Natural killer cell (primary cell): ENCODE measurements at regions of chr12 and their contacts with region 1.

Region 1: GRCh38 chr12:6873094-6874014 is at the start of gene SPSB2:
- DNase-seq: peak; percentile 99 to 100
- ATAC-seq: peak; percentile 87 to 99 (median 91)
- H3K4me3 ChIP-seq: peak within 1 kb of the TSS; percentile 81
- H3K4me3 Mint-ChIP-seq: peak within 1 kb of the TSS; percentile 93
- H3K27ac ChIP-seq: peak within 1 kb of the TSS; percentile 63
- H3K27ac Mint-ChIP-seq: peak within 1 kb of the TSS; percentile 87 to 94
- H3K4me1 ChIP-seq: peaks cover 50% of the 10 kb centered on the region
- H3K4me1 Mint-ChIP-seq: peaks cover 41 to 56% of the 10 kb centered on the region in 2 donors
- H3K27me3 ChIP-seq: no peaks in the 10 kb centered on the region
- H3K27me3 Mint-ChIP-seq: no peaks in the 10 kb centered on the region
- CTCF ChIP-seq: no peak
- total RNA-seq, gene SPSB2: 8.1 to 19.1 (median 8.4) TPM

Region 2: GRCh38 chr12:6851921-6852650 is 21.3 kb before region 1 on chr12 and contains the start of gene USP5:
- intact Hi-C with region 1: loop called (anchors 1 kb)
- DNase-seq: peak; percentile 96 to 99
- ATAC-seq: peak; percentile 79 to 92 (median 80)
- H3K4me3 ChIP-seq: peak within 1 kb of the TSS; percentile 76
- H3K4me3 Mint-ChIP-seq: peak within 1 kb of the TSS; percentile 91
- H3K27ac ChIP-seq: peak within 1 kb of the TSS; percentile 95
- H3K27ac Mint-ChIP-seq: peak within 1 kb of the TSS; percentile 95 to 99
- H3K4me1 ChIP-seq: peaks cover 22% of the 10 kb centered on the region
- H3K4me1 Mint-ChIP-seq: peaks cover 8 to 43% of the 10 kb centered on the region in 2 donors
- H3K27me3 ChIP-seq: no peaks in the 10 kb centered on the region
- H3K27me3 Mint-ChIP-seq: no peaks in the 10 kb centered on the region
- CTCF ChIP-seq: no peak
- total RNA-seq, gene USP5: 48.3 to 67.2 (median 57.2) TPM

Region 3: DNA sequence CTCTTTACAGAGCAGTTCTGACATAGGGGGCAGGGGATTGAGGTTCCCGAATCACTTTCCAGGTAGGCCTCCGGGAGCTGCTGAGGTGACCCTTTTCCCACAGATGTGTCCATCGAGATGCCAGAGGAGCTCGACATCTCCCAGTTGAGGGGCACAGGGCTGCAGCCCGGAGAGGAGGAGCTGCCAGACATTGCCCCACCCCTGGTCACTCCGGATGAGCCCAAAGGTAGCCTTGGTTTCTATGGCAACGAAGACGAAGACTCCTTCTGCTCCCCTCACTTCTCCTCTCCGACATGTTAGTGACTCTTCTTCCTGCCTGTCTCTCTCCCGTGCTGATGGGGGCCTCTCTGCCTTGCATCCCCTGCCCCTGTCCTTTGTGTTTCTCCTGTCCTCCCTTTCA is 10.3 kb before region 1 on chr12:
- intact Hi-C with region 1: no loop called
- DNase-seq: no peak
- ATAC-seq: no peak
- H3K4me3 ChIP-seq: no peak overlapping the region
- H3K4me3 Mint-ChIP-seq: no peak overlapping the region
- H3K27ac ChIP-seq: no peak overlapping the region
- H3K27ac Mint-ChIP-seq: no peak overlapping the region
- H3K4me1 ChIP-seq: peaks cover 9% of the 10 kb centered on the region
- H3K4me1 Mint-ChIP-seq: peaks cover 0 to 5% of the 10 kb centered on the region in 2 donors
- H3K27me3 ChIP-seq: no peaks in the 10 kb centered on the region
- H3K27me3 Mint-ChIP-seq: no peaks in the 10 kb centered on the region
- CTCF ChIP-seq: no peak

Region 4: DNA sequence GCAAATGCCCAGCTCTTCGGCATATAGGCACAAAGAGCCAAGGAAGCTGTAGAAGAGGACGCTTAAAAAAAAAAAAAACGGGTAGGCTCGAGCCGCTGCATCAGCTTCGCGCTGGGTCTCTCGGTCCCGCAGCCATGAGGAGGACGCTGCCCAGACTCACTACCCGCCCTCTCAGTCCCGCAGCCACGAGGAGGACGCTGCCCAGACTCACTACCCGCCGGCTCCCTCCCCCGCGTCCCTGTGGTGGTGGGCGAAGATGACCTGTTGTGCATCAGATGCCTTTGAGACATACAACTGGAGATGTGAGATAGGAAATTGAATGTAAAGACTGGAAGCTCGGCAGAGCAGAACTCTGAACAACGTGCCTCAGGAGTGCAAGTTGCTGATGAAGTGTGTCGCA is 11.2 kb after region 1 on chr12:
- intact Hi-C with region 1: no loop called
- DNase-seq: no peak
- ATAC-seq: no peak
- H3K4me3 ChIP-seq: no peak overlapping the region
- H3K4me3 Mint-ChIP-seq: no peak overlapping the region
- H3K27ac ChIP-seq: no peak overlapping the region
- H3K27ac Mint-ChIP-seq: no peak overlapping the region
- H3K4me1 ChIP-seq: no peaks in the 10 kb centered on the region
- H3K4me1 Mint-ChIP-seq: no peaks in the 10 kb centered on the region
- H3K27me3 ChIP-seq: no peaks in the 10 kb centered on the region
- H3K27me3 Mint-ChIP-seq: no peaks in the 10 kb centered on the region
- CTCF ChIP-seq: no peak

Region 5: DNA sequence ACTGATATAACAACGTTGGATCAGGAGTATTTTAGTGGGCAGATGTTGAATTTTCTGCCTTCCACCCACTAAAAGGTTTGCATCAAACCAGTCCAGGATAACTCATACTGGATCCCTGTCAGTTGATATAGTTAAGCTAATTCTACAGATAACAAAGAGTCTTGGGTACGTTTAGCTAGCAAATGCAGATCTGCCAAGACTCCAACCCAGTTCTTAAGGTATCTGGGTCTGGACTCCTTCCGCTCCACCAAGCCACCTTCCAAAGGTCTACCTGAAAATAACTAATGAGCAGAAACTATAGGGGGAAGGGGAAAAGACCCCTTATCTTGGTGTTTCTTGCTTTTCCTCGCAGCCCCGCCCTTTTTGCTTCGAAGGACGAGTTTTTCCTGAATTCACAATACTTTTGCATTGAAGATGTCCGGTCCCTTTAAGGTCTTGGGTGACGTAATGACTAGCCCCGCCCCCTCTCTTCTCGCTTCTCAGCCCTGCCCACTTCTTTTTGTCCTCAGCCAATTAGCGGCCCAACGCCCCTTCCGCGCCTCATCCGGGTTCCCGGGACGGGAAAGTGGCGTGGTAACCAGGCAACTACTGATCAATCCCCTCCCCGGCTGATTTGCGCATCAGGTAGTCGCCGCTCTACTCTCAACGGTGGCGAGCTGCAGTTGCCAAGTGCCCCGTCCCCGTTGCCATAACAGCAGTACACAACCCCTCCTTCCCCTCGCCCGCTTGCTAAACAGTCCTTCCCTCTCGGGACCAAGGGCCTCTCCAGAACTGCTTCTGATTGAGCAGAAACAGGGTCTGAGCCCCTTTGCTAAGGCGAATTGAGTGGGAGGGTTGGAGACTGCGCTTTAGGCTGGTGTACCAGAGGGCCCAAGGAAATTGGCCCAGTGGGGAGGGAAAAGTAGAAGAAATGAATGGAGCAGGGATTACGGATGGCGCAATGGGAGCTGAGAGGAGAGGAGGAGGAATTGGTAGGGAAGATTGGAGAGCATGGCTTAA is 31.2 kb after region 1 on chr12 and contains the start of gene LRRC23:
- intact Hi-C with region 1: loop called (anchors 1 kb)
- DNase-seq: peak; percentile 94 to 99
- ATAC-seq: peak; percentile 96 to 98 (median 97)
- H3K4me3 ChIP-seq: peak within 1 kb of the TSS; percentile 73
- H3K4me3 Mint-ChIP-seq: no peak within 1 kb of the TSS
- H3K27ac ChIP-seq: peak within 1 kb of the TSS; percentile 95
- H3K27ac Mint-ChIP-seq: no peak within 1 kb of the TSS
- H3K4me1 ChIP-seq: peaks cover 14% of the 10 kb centered on the region
- H3K4me1 Mint-ChIP-seq: no peaks in the 10 kb centered on the region
- H3K27me3 ChIP-seq: no peaks in the 10 kb centered on the region
- H3K27me3 Mint-ChIP-seq: no peaks in the 10 kb centered on the region
- CTCF ChIP-seq: no peak
- total RNA-seq, gene LRRC23: 8.1 to 16.8 (median 9.8) TPM

Region 6: GRCh38 chr12:6944381-6945186 is 71.2 kb after region 1 on chr12:
- intact Hi-C with region 1: loop called (anchors 1 kb)
- DNase-seq: peak; percentile 83 to 94
- ATAC-seq: peak; percentile 51 to 73 (median 53)
- H3K4me3 ChIP-seq: peak overlapping the region; percentile 91
- H3K4me3 Mint-ChIP-seq: peak overlapping the region; percentile 82
- H3K27ac ChIP-seq: peak overlapping the region; percentile 99
- H3K27ac Mint-ChIP-seq: peak overlapping the region; percentile 98 to 99
- H3K4me1 ChIP-seq: peaks cover 66% of the 10 kb centered on the region
- H3K4me1 Mint-ChIP-seq: peaks cover 61 to 69% of the 10 kb centered on the region in 2 donors
- H3K27me3 ChIP-seq: no peaks in the 10 kb centered on the region
- H3K27me3 Mint-ChIP-seq: no peaks in the 10 kb centered on the region
- CTCF ChIP-seq: peak; percentile 90

Region 7: GRCh38 chr12:7018350-7019042 is 145.1 kb after region 1 on chr12 and contains the start of gene LPCAT3:
- intact Hi-C with region 1: loop called (anchors 1 kb)
- DNase-seq: peak; percentile 97 to 99
- ATAC-seq: peak; percentile 91 to 98 (median 91)
- H3K4me3 ChIP-seq: peak within 1 kb of the TSS; percentile 92
- H3K4me3 Mint-ChIP-seq: peak within 1 kb of the TSS; percentile 87
- H3K27ac ChIP-seq: peak within 1 kb of the TSS; percentile 93
- H3K27ac Mint-ChIP-seq: peak within 1 kb of the TSS; percentile 69 to 82
- H3K4me1 ChIP-seq: peaks cover 11% of the 10 kb centered on the region
- H3K4me1 Mint-ChIP-seq: peaks cover 13 to 25% of the 10 kb centered on the region in 2 donors
- H3K27me3 ChIP-seq: no peaks in the 10 kb centered on the region
- H3K27me3 Mint-ChIP-seq: no peaks in the 10 kb centered on the region
- CTCF ChIP-seq: peak; percentile 89
- total RNA-seq, gene LPCAT3: 45.6 to 54.3 (median 45.6) TPM

Region 8: DNA sequence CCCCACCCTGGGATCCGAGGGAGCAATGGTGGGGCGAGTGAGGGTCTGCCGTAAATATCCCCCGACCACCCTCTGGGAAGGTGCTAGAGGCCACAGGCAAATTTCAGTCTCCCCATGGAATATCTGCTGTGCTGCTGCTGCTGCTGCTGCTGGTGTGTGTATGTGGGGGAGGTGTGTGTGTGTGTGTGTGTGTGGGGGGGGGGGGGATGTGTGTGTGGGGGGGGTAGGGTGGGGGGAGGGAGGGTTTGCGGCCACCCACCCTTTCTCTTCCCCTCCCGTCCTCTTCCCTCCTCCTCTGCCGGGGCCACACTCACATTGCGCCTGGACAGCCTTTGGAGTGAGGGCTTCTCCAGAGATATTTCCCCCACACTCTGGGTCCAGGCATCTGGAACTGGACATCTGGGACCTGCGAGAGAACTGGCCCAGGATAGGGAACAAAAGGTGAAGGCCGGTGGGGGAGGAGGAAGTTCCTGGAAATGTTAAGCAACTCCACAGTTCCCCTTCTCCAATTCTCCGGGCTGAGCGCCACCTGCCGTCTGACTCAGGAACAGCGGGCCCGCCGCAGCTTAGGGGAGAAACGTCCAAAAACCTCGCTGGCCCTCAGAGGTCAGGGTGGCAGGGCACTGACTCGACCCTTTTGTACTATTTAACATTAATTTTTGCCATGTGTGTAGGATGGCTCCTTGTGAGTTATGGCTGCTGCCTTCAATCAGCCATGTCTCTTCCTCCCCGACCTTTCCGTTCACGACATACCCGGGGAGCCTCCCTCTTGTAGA is 235.6 kb after region 1 on chr12 and contains the start of gene C1RL:
- intact Hi-C with region 1: loop called (anchors 1 kb)
- DNase-seq: peak; percentile 80 to 81
- ATAC-seq: peak; percentile 54 to 65 (median 63)
- H3K4me3 ChIP-seq: peak within 1 kb of the TSS; percentile 65
- H3K4me3 Mint-ChIP-seq: peak within 1 kb of the TSS; percentile 92
- H3K27ac ChIP-seq: peak within 1 kb of the TSS; percentile 72
- H3K27ac Mint-ChIP-seq: peak within 1 kb of the TSS; percentile 84 to 96
- H3K4me1 ChIP-seq: peaks cover 29% of the 10 kb centered on the region
- H3K4me1 Mint-ChIP-seq: peaks cover 40 to 46% of the 10 kb centered on the region in 2 donors
- H3K27me3 ChIP-seq: no peaks in the 10 kb centered on the region
- H3K27me3 Mint-ChIP-seq: no peaks in the 10 kb centered on the region
- CTCF ChIP-seq: peak; percentile 93
- total RNA-seq, gene C1RL: 29.1 to 35.5 (median 31.0) TPM